H1 (cell line): ENCODE measurements at regions of chr3 and their contacts with region 1.

Region 1: GRCh38 chr3:107927361-107928083 is 163.3 kb downstream of the CD47 start:
- DNase-seq: peak; percentile 33 to 84
- H3K4me3 ChIP-seq: peak overlapping the region; percentile 46 to 68 (median 56)
- H3K27ac ChIP-seq: no peak overlapping the region
- H3K4me1 ChIP-seq: peaks cover 0 to 5% (median 0%) of the 10 kb centered on the region in 4 experiments; a peak in 3 of 7 replicates
- H3K27me3 ChIP-seq: peaks cover 2 to 9% (median 6%) of the 10 kb centered on the region in 4 experiments
- CTCF ChIP-seq: peak; percentile 71 to 96 (median 85)
- EP300 ChIP-seq: no peak
- POLR2A ChIP-seq: peak in 1 of 2 experiments; percentile 34; a peak in 1 of 3 replicates
- RAD21 ChIP-seq: peak; percentile 50 to 65; a peak in 3 of 4 replicates

Region 2: GRCh38 chr3:107910713-107911259 is 16.7 kb before region 1 on chr3:
- CTCF ChIA-PET with region 1: interaction called, 12 read pairs
- POLR2A ChIA-PET with region 1: no interaction called
- DNase-seq: no peak
- H3K4me3 ChIP-seq: no peak overlapping the region
- H3K27ac ChIP-seq: no peak overlapping the region
- H3K4me1 ChIP-seq: no peaks in the 10 kb centered on the region
- H3K27me3 ChIP-seq: no peaks in the 10 kb centered on the region
- CTCF ChIP-seq: no peak
- EP300 ChIP-seq: no peak
- POLR2A ChIP-seq: no peak
- RAD21 ChIP-seq: no peak

Region 3: GRCh38 chr3:107938143-107938542 is 10.6 kb after region 1 on chr3:
- CTCF ChIA-PET with region 1: interaction called, 20 read pairs
- POLR2A ChIA-PET with region 1: interaction called, 7 read pairs
- DNase-seq: no peak
- H3K4me3 ChIP-seq: no peak overlapping the region
- H3K27ac ChIP-seq: no peak overlapping the region
- H3K4me1 ChIP-seq: no peaks in the 10 kb centered on the region; a peak in 1 of 7 replicates
- H3K27me3 ChIP-seq: no peaks in the 10 kb centered on the region
- CTCF ChIP-seq: peak in 2 of 3 experiments; percentile 49 to 52; a peak in 3 of 4 replicates
- EP300 ChIP-seq: no peak
- POLR2A ChIP-seq: no peak
- RAD21 ChIP-seq: peak; percentile 78 to 83

Region 4: GRCh38 chr3:108085810-108086350 is 158.4 kb after region 1 on chr3:
- CTCF ChIA-PET with region 1: no interaction called
- POLR2A ChIA-PET with region 1: no interaction called
- DNase-seq: no peak
- H3K4me3 ChIP-seq: no peak overlapping the region
- H3K27ac ChIP-seq: no peak overlapping the region
- H3K4me1 ChIP-seq: peaks cover 0 to 3% (median 0%) of the 10 kb centered on the region in 4 experiments; a peak in 2 of 7 replicates
- H3K27me3 ChIP-seq: peaks cover 0 to 2% (median under 1%) of the 10 kb centered on the region in 4 experiments; a peak in 4 of 7 replicates
- CTCF ChIP-seq: no peak
- EP300 ChIP-seq: no peak
- POLR2A ChIP-seq: no peak
- RAD21 ChIP-seq: no peak